ENCODE measurements at regions of chr10 and their contacts with region 1.

Region 1: DNA sequence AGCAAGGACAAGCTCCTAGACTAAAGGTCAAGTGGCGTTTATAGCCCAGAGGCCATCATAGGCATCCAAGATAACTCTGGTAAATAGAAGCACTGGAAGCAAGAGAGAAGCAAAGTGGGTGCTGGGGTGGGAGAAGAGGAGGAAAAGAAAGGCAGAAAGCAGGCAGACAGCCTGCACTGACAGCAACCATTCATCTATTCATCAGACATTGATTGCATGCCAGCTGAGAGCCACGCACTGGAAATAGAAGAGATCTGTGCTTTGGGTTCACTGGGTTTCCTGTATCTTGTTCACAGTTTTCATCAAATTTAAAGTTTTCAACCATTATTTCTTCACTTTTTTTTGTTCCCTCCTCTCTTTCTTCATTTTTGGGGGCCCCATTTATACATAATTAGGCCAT is 4.7 kb upstream of the SLIT1 start:
- DNase-seq: no peak
- H3K4me3 ChIP-seq: no peak overlapping the region
- H3K27ac ChIP-seq: no peak overlapping the region
- H3K4me1 ChIP-seq: no peaks in the 10 kb centered on the region
- H3K27me3 ChIP-seq: peaks cover 37 to 51% of the 10 kb centered on the region in 2 experiments
- CTCF ChIP-seq: no peak
- POLR2A ChIP-seq: no peak

Region 2: GRCh38 chr10:96524741-96525140 is 665.7 kb before region 1 on chr10:
- CTCF ChIA-PET with region 1: no interaction called
- POLR2A ChIA-PET with region 1: no interaction called
- dilution Hi-C with region 1: no loop called
- intact Hi-C with region 1: loop called (anchors 5 kb)
- DNase-seq: no peak
- H3K4me3 ChIP-seq: no peak overlapping the region
- H3K27ac ChIP-seq: no peak overlapping the region
- H3K4me1 ChIP-seq: no peaks in the 10 kb centered on the region
- H3K27me3 ChIP-seq: no peaks in the 10 kb centered on the region
- CTCF ChIP-seq: no peak
- POLR2A ChIP-seq: no peak